ENCODE measurements at regions of chr19 and their contacts with region 1.

Region 1: GRCh38 chr19:38142176-38143035 is 81.6 kb downstream of the DPF1 start:
- DNase-seq: peak in 1 of 2 donors; percentile 68
- H3K4me3 ChIP-seq: no peak overlapping the region
- H3K27ac ChIP-seq: no peak overlapping the region
- H3K4me1 ChIP-seq: no peaks in the 10 kb centered on the region
- H3K27me3 ChIP-seq: no peaks in the 10 kb centered on the region
- CTCF ChIP-seq: peak; percentile 58 to 72 (median 59)

Region 2: DNA sequence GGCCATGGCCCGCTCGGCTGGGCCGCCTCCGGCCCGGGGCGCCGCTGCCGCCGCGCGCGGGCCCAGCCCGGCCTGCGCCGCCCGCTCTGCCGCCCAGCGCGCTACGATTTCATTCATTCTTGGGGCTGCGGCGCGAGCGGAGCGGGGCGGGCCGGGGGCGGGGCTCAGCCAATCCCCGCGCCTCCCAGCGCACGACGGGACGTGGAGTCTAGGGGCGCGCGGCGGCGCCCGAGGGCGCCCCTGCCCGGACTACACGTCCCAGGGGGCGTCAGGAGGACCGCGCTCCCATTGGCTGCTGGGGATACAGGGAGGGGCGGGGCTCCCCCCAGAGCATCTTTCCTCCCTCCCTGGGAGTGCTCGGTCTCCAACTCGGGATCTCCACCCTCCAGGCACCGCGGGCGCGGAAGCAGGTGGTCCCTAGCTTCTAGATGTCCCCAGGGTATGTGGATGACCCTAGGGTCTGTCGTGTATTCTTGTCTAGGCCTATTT is 87.2 kb after region 1 on chr19:
- intact Hi-C with region 1: loop called (anchors 5 kb)
- DNase-seq: peak in 1 of 2 donors; percentile 77
- H3K4me3 ChIP-seq: peak overlapping the region in 1 of 2 donors; percentile 45
- H3K27ac ChIP-seq: no peak overlapping the region
- H3K4me1 ChIP-seq: peaks cover 11 to 12% of the 10 kb centered on the region in 2 donors
- H3K27me3 ChIP-seq: peaks cover 32% of the 10 kb centered on the region
- CTCF ChIP-seq: no peak

Measured in ascending aorta (tissue), 2 donors.